ENCODE measurements at regions of chr21 and their contacts with region 1.

Region 1: GRCh38 chr21:44801468-44802395 is at the start of gene UBE2G2:
- DNase-seq: peak; percentile 92
- ATAC-seq: peak; percentile 95
- H3K4me3 Mint-ChIP-seq: peak within 1 kb of the TSS; percentile 94
- H3K27ac Mint-ChIP-seq: peak within 1 kb of the TSS; percentile 90
- H3K4me1 Mint-ChIP-seq: peaks cover 54% of the 10 kb centered on the region
- H3K27me3 Mint-ChIP-seq: no peaks in the 10 kb centered on the region
- total RNA-seq, gene UBE2G2: 103 to 121 TPM

Region 2: GRCh38 chr21:44428281-44428942 is 373.3 kb before region 1 on chr21:
- CTCF ChIA-PET with region 1: no interaction called
- POLR2A ChIA-PET with region 1: no interaction called
- intact Hi-C with region 1: no loop called
- DNase-seq: peak; percentile 71
- ATAC-seq: peak; percentile 77
- H3K4me3 Mint-ChIP-seq: no peak overlapping the region
- H3K27ac Mint-ChIP-seq: no peak overlapping the region
- H3K4me1 Mint-ChIP-seq: no peaks in the 10 kb centered on the region
- H3K27me3 Mint-ChIP-seq: no peaks in the 10 kb centered on the region

Region 3: DNA sequence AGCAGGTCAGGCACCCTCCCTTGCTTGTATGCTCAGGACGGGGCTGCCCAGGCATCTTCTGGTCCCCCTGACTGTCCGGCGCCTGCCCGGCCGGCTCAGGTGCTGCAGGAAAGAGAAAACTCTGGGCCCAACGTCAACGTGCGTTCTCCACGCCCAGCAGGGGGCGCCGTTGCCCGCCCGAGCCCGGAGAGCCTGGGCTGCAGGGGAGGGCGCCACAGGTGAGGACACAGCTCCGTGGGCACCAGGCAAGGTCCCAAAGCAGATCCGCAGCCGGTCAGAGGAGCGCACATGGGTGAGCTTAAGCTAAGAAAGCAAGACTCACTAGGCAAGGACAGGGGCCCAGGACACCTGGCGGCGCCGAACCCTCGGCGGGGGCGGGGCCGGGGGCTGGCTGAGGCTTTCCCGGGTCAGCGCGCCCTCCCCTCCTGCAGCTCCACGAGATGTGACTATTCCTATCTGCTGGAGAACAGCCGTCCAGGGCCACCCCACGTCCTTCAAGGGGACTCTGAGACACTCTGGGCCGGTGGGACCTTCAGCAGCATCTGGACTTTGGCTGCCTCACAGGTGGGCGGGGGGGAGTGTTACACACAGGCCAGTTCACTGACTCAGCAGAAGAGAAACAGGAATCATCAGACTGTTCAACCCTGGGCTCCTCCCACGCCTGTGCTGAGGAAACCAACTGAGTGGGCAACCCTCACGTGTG is 291.1 kb before region 1 on chr21:
- CTCF ChIA-PET with region 1: interaction called, 10 read pairs
- POLR2A ChIA-PET with region 1: no interaction called
- intact Hi-C with region 1: no loop called
- DNase-seq: peak; percentile 89
- ATAC-seq: peak; percentile 94
- H3K4me3 Mint-ChIP-seq: no peak overlapping the region
- H3K27ac Mint-ChIP-seq: no peak overlapping the region
- H3K4me1 Mint-ChIP-seq: no peaks in the 10 kb centered on the region
- H3K27me3 Mint-ChIP-seq: no peaks in the 10 kb centered on the region

Region 4: GRCh38 chr21:44845399-44846223 is 43.9 kb after region 1 on chr21:
- CTCF ChIA-PET with region 1: interaction called, 11 read pairs
- POLR2A ChIA-PET with region 1: interaction called, 4 read pairs
- intact Hi-C with region 1: loop called (anchors 1 to 2 kb)
- DNase-seq: peak; percentile 81
- ATAC-seq: peak; percentile 86
- H3K4me3 Mint-ChIP-seq: peak overlapping the region; percentile 64
- H3K27ac Mint-ChIP-seq: peak overlapping the region; percentile 51
- H3K4me1 Mint-ChIP-seq: peaks cover 7% of the 10 kb centered on the region
- H3K27me3 Mint-ChIP-seq: no peaks in the 10 kb centered on the region

Region 5: GRCh38 chr21:44920694-44921604 is 119.2 kb after region 1 on chr21 and contains the start of gene ITGB2:
- CTCF ChIA-PET with region 1: no interaction called
- POLR2A ChIA-PET with region 1: no interaction called
- intact Hi-C with region 1: loop called in 1 of 2 experiments (anchors 5 kb)
- DNase-seq: peak; percentile 85
- ATAC-seq: peak; percentile 73
- H3K4me3 Mint-ChIP-seq: peak within 1 kb of the TSS; percentile 90
- H3K27ac Mint-ChIP-seq: peak within 1 kb of the TSS; percentile 96
- H3K4me1 Mint-ChIP-seq: peaks cover 72% of the 10 kb centered on the region
- H3K27me3 Mint-ChIP-seq: no peaks in the 10 kb centered on the region
- total RNA-seq, gene ITGB2: 217 to 250 TPM

Region 6: DNA sequence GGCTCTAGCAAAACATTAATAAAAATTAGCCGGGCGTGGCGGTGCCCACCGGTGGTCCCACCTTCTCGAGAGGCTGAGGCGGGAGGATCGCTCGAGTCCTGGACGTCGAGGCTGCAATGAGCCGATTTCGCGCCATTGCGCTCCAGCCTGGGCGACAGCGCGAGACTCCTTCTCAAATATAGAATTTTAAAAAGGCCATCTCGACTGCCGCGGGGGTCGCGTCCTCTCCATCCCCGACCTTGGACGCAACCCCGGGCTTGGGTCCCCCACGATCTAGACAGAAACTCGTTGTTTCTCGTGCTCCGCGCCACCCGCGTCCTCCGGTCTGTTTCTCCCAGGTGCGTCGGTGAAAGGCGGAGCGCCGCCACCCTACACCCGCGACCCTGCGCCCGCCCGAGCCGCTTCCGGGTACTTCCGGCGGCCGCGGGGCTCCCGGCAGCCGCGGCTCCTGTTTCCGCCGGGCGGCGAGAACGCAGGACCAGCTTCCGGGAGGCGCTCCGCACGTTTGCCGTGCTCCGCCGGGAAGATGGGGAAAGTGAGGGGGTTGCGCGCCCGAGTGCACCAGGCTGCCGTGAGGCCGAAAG is 137.9 kb after region 1 on chr21 and contains the start of gene SLX9:
- CTCF ChIA-PET with region 1: interaction called, 8 read pairs
- POLR2A ChIA-PET with region 1: no interaction called
- intact Hi-C with region 1: loop called in 1 of 2 experiments (anchors 1 kb)
- DNase-seq: peak; percentile 91
- ATAC-seq: peak; percentile 96
- H3K4me3 Mint-ChIP-seq: peak within 1 kb of the TSS; percentile 88
- H3K27ac Mint-ChIP-seq: peak within 1 kb of the TSS; percentile 86
- H3K4me1 Mint-ChIP-seq: peaks cover 37% of the 10 kb centered on the region
- H3K27me3 Mint-ChIP-seq: no peaks in the 10 kb centered on the region
- total RNA-seq, gene SLX9: 60.8 to 68.8 TPM

Region 7: DNA sequence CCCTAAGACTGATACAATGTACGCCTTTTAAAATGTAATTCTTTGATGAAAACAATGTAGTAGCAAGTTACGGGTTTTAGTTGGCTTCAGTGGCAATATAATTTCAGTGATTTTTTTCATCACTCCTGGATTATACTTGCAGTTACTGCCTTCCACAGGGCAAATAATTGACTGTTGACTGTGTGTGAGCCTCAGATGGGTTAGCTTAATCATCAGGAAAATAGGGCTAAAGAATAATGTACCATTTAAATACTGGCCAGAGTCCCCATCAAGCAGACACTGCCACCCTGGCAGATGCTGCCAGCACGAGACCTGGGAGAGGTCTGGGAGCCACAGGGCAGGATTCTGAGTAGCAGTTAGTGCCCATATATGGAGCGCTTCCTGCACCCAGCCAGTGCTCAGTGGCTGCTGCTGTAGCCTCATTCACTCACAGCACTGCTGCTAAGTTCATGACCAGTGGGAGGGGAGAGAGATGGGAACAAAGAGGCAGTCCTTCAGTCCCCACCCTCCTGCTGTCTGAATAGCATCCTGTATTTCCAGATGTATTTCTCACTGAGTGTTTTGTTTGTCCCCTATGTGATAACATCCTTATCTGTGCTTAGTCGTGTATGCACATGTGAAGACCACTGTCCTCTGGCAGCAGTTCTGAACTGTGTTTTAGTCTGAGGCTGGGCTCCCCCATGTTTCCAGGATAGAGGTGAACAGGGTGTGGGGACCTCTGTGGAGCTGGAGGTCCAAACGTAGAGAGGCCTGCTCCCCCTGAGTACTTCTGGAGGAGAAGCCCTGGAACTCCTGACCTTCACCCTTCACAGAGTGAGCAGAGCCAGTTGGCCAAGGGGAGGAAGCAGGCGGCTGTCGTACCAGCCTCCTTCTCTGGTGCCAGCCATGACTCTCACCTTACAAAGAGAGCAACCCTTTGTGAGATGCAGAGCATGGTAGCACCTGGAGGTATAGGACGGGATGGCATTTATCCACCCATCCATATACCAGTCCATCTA is 353.1 kb after region 1 on chr21:
- CTCF ChIA-PET with region 1: no interaction called
- POLR2A ChIA-PET with region 1: no interaction called
- intact Hi-C with region 1: no loop called
- DNase-seq: peak; percentile 45
- ATAC-seq: peak; percentile 59
- H3K4me3 Mint-ChIP-seq: no peak overlapping the region
- H3K27ac Mint-ChIP-seq: no peak overlapping the region
- H3K4me1 Mint-ChIP-seq: peaks cover 37% of the 10 kb centered on the region
- H3K27me3 Mint-ChIP-seq: no peaks in the 10 kb centered on the region

Region 8: DNA sequence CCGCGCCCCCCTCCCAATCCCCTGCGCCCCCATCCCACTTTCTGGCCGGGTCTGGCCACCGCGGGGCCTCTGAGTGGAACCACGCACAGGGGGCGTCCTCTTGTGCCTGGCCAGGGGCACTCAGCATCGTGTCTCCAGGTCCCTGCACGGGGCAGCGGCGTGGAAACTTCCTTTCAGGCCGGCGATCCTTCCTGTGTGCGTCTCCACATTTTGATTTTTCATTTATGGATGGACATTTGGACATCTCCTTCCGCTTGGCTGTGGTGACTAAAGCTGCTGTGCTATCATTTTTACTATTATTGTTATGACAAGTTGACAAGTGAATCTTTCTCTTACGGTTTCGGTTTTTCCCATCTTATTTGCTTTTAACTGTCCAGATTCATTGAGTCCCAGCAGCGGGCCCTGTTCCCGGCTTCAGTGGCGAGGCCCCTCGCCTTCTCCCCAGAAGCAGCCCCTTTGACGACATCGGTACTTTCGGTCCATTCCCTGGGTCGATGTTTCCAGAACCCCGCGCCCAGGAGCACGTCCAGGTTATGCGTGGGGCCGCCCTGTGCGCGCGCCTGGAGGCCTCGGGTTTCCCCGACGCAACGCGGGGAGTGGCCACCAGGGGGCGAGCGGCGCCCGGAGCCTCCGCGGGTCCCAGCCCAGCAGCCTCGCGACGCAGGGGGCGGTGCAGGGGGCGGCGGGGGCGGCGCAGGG is 752.9 kb after region 1 on chr21:
- CTCF ChIA-PET with region 1: no interaction called
- POLR2A ChIA-PET with region 1: no interaction called
- intact Hi-C with region 1: no loop called
- DNase-seq: peak; percentile 95
- ATAC-seq: peak; percentile 62
- H3K4me3 Mint-ChIP-seq: peak overlapping the region; percentile 95
- H3K27ac Mint-ChIP-seq: peak overlapping the region; percentile 97
- H3K4me1 Mint-ChIP-seq: peaks cover 33% of the 10 kb centered on the region
- H3K27me3 Mint-ChIP-seq: no peaks in the 10 kb centered on the region

Region 9: GRCh38 chr21:46048926-46049889 is 1247.5 kb after region 1 on chr21:
- CTCF ChIA-PET with region 1: no interaction called
- POLR2A ChIA-PET with region 1: no interaction called
- intact Hi-C with region 1: no loop called
- DNase-seq: no peak
- ATAC-seq: no peak
- H3K4me3 Mint-ChIP-seq: no peak overlapping the region
- H3K27ac Mint-ChIP-seq: no peak overlapping the region
- H3K4me1 Mint-ChIP-seq: peaks cover 11% of the 10 kb centered on the region
- H3K27me3 Mint-ChIP-seq: peaks cover 5% of the 10 kb centered on the region

Measured in activated CD4-positive, alpha-beta T cell treated with anti-CD3 and anti-CD28 coated beads for 36 hours (primary cell).